Activated B cell treated with CpG ODN at 0.5 μM for 24 hours (primary cell): ENCODE measurements at regions of chr11 and their contacts with region 1.

Region 1: GRCh38 chr11:85854557-85855340 is 434 bp upstream of the CCDC83 start:
- DNase-seq: peak; percentile 88
- ATAC-seq: peak; percentile 91
- H3K4me3 Mint-ChIP-seq: peak overlapping the region; percentile 90
- H3K27ac Mint-ChIP-seq: peak overlapping the region; percentile 79
- H3K4me1 Mint-ChIP-seq: peaks cover 8% of the 10 kb centered on the region
- H3K27me3 Mint-ChIP-seq: peaks cover 3% of the 10 kb centered on the region
- CTCF ChIP-seq: peak; percentile 65

Region 2: DNA sequence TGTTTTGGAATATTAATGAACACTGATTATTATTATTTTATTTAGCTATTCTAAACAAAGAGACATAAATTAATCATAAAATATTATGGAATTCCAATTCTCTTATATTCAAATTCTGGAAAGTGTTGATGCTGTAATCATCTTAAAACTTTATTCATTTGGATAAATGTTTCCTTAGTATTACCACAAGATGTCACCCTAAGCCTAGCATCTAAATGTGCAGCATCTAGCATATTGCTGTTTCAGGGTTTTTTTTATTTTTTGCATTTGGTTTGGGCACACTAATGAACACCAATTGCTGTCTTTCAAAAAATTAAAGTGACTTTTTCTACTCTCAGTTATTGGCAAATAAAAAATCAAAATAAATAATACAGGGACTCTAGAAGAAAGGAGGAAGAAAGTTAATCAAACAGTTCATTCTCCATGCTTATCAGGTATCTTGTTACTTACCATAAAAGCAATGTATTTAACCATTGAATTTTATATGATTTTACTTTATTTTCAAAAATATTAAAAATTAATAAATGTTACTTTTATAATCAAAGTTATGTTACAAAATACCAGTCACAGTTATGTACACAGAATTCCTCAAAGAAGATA is 259.4 kb before region 1 on chr11:
- CTCF ChIA-PET with region 1: interaction called, 7 read pairs
- POLR2A ChIA-PET with region 1: no interaction called
- intact Hi-C with region 1: loop called (anchors 1 kb)
- DNase-seq: no peak
- ATAC-seq: no peak
- H3K4me3 Mint-ChIP-seq: no peak overlapping the region
- H3K27ac Mint-ChIP-seq: no peak overlapping the region
- H3K4me1 Mint-ChIP-seq: no peaks in the 10 kb centered on the region
- H3K27me3 Mint-ChIP-seq: no peaks in the 10 kb centered on the region
- CTCF ChIP-seq: peak; percentile 35

Region 3: GRCh38 chr11:85672105-85672902 is 182.4 kb before region 1 on chr11:
- CTCF ChIA-PET with region 1: no interaction called
- POLR2A ChIA-PET with region 1: no interaction called
- intact Hi-C with region 1: no loop called
- DNase-seq: no peak
- ATAC-seq: no peak
- H3K4me3 Mint-ChIP-seq: no peak overlapping the region
- H3K27ac Mint-ChIP-seq: no peak overlapping the region
- H3K4me1 Mint-ChIP-seq: no peaks in the 10 kb centered on the region
- H3K27me3 Mint-ChIP-seq: no peaks in the 10 kb centered on the region
- CTCF ChIP-seq: no peak

Region 4: GRCh38 chr11:85866137-85866827 is 11.5 kb after region 1 on chr11:
- CTCF ChIA-PET with region 1: interaction called, 10 read pairs
- POLR2A ChIA-PET with region 1: no interaction called
- intact Hi-C with region 1: no loop called
- DNase-seq: no peak
- ATAC-seq: no peak
- H3K4me3 Mint-ChIP-seq: no peak overlapping the region
- H3K27ac Mint-ChIP-seq: no peak overlapping the region
- H3K4me1 Mint-ChIP-seq: no peaks in the 10 kb centered on the region
- H3K27me3 Mint-ChIP-seq: peaks cover 2% of the 10 kb centered on the region
- CTCF ChIP-seq: no peak

Region 5: DNA sequence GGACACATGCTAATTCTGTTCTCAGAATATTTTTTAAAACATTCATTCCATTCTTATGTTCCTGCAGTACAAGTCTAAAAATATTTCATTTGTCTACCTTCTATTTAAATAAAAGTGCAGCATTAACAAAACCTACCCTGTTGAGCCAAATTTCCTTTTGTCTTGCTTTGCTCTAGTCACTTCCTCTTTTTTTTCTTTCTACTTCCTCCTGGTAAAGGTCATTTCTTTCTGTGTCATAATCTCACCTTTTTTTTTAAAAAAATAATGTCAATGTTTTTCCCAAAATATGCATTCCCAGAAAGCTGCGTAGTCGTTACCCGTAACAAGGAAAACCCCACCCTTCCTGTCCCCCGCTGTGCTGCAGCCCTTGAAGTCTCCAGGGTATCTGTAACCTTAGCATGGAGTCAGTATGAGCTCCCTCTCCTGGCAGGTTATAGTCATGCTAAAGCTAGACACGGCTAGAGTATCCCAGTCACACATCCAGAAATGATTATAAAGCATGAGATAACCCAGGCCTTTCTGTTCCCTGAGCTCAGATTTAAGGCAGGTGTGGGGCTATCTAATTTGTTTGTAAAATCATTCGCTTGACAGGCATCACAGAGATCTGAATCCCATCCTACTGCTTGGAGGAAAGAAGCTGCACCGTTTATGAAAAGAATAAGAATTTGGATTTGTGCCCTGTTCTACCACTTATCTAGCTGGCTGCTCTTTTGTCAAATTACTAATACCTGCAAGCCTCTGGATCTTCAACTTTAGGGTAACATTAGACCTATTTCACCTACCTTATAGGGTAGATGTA is 338.7 kb after region 1 on chr11:
- CTCF ChIA-PET with region 1: interaction called, 3 read pairs
- POLR2A ChIA-PET with region 1: no interaction called
- intact Hi-C with region 1: loop called (anchors 2 kb)
- DNase-seq: peak; percentile 48
- ATAC-seq: peak; percentile 96
- H3K4me3 Mint-ChIP-seq: peak overlapping the region; percentile 76
- H3K27ac Mint-ChIP-seq: peak overlapping the region; percentile 92
- H3K4me1 Mint-ChIP-seq: peaks cover 30% of the 10 kb centered on the region
- H3K27me3 Mint-ChIP-seq: no peaks in the 10 kb centered on the region
- CTCF ChIP-seq: peak; percentile 50

Region 6: GRCh38 chr11:86291466-86292262 is 436.9 kb after region 1 on chr11:
- CTCF ChIA-PET with region 1: interaction called, 13 read pairs
- POLR2A ChIA-PET with region 1: interaction called, 3 read pairs
- intact Hi-C with region 1: loop called (anchors 1 kb)
- DNase-seq: no peak
- ATAC-seq: peak; percentile 44
- H3K4me3 Mint-ChIP-seq: no peak overlapping the region
- H3K27ac Mint-ChIP-seq: no peak overlapping the region
- H3K4me1 Mint-ChIP-seq: peaks cover 35% of the 10 kb centered on the region
- H3K27me3 Mint-ChIP-seq: no peaks in the 10 kb centered on the region
- CTCF ChIP-seq: peak; percentile 34

Region 7: DNA sequence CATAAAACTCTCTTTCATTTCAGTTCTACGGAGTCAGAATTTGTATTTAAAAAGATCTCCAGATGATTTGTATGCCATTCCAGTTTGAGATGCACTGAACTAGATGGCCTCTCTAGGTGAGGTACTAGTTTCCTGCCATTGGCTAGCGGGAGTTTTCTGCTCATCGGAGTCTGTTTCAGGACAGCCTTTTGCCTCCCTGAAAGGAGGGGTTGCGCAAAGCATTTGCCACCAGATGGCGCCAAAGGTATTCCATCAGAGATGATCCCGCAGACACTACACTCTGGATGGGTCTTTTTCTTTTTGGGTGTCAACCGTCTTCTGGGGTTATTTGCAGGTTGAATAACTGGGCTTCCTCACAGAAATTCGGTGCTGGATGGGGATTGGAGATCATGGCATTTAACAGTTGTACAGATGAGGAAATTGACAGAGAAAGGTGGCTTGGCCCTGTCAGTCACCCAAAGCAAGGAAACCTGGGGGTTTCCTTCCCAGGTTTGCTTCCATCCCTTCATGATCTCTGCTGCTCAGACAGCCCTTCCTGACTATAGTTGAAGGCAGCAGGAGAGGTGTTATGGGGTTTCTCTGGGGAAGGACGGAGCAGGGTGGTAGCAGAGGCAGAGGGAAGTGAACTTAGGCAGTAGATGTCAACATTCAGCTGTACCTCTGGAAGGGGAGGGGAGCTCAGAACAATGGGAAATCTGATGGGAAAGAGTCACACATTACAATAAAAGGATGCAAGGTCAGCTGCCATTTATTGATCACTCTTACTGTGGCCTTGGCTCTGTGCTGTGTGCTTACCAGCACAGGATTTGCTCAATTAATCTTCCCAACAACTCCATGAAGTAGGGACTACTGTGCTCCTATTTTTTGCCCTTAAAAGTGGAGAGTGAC is 601.5 kb after region 1 on chr11:
- CTCF ChIA-PET with region 1: interaction called, 6 read pairs
- POLR2A ChIA-PET with region 1: no interaction called
- intact Hi-C with region 1: loop called (anchors 1 kb)
- DNase-seq: peak; percentile 45
- ATAC-seq: peak; percentile 47
- H3K4me3 Mint-ChIP-seq: no peak overlapping the region
- H3K27ac Mint-ChIP-seq: no peak overlapping the region
- H3K4me1 Mint-ChIP-seq: peaks cover 2% of the 10 kb centered on the region
- H3K27me3 Mint-ChIP-seq: no peaks in the 10 kb centered on the region
- CTCF ChIP-seq: peak; percentile 65

Region 8: GRCh38 chr11:87037450-87038234 is 1182.9 kb after region 1 on chr11 and contains the start of gene TMEM135:
- CTCF ChIA-PET with region 1: no interaction called
- POLR2A ChIA-PET with region 1: no interaction called
- intact Hi-C with region 1: loop called (anchors 10 kb)
- DNase-seq: peak; percentile 91
- ATAC-seq: peak; percentile 96
- H3K4me3 Mint-ChIP-seq: peak within 1 kb of the TSS; percentile 99
- H3K27ac Mint-ChIP-seq: peak within 1 kb of the TSS; percentile 75
- H3K4me1 Mint-ChIP-seq: peaks cover 34% of the 10 kb centered on the region
- H3K27me3 Mint-ChIP-seq: no peaks in the 10 kb centered on the region
- CTCF ChIP-seq: no peak
- total RNA-seq, gene TMEM135: 7.4 and 10.1 TPM in 2 replicates